Dendritic cell treated with granulocyte-macrophage colony-stimulating factor and Interleukin-4, amounts not matched to agents 40 ng/mL and 50 ng/mL, for 4 days (primary cell): ENCODE measurements at regions of chr1 and their contacts with region 1.

Region 1: GRCh38 chr1:36397378-36398230 is at the start of gene LSM10:
- H3K4me3 Mint-ChIP-seq: peak within 1 kb of the TSS; percentile 93
- H3K27ac Mint-ChIP-seq: peak within 1 kb of the TSS; percentile 95
- H3K4me1 Mint-ChIP-seq: peaks cover 49% of the 10 kb centered on the region
- H3K27me3 Mint-ChIP-seq: no peaks in the 10 kb centered on the region

Region 2: DNA sequence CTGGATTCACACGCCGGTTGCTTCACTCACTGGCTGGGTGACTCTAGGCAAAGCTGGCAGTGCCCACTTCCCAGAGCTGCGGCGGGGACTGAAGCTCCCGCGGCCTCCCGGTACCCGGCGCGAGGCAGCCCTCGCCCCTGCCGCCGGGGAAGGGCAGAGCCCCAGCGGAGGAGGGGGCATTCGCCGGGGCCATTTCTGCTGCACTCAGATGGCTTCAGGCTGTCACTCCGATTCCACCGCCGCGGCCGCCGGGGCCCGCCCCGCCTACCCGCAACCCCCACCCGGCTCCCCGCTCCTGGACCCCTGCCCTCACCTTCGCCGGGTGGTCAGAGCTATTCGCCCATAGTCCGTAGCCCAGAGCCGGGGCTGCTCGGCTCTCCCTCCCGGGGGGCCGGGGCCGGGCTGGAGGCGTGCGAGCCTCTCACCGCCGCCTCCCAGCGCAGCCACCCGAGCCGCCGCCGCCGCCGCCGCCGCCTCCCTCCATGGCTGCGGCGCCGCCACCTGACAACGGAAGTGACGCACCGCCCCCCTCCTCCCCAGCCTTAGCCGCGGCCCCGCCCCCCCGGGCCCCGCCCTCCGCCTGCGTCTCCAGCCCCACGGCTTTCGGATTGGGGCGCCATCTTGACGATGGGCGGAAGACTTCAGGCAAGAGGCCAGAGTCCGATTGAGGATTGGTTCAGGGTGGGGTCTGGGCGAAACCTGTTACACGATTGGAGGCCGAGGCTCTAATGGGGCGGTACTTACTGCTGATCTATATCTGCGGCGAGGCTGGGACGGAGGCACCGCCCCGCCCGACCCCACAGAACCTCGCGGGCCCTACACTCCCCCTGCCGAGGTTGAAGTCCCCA is 12.0 kb before region 1 on chr1 and contains the start of gene STK40:
- intact Hi-C with region 1: loop called (anchors 1 kb)
- H3K4me3 Mint-ChIP-seq: peak within 1 kb of the TSS; percentile 78
- H3K27ac Mint-ChIP-seq: peak within 1 kb of the TSS; percentile 100
- H3K4me1 Mint-ChIP-seq: peaks cover 74% of the 10 kb centered on the region
- H3K27me3 Mint-ChIP-seq: no peaks in the 10 kb centered on the region